Lower leg skin (tissue), 4 donors: ENCODE measurements at regions of chr7 and their contacts with region 1.

Region 1: GRCh38 chr7:121329191-121330052 is 622 bp downstream of the WNT16 start:
- DNase-seq: peak; percentile 26 to 84
- H3K4me3 ChIP-seq: peak overlapping the region; percentile 10
- CTCF ChIP-seq: no peak
- POLR2A ChIP-seq: no peak

Region 2: GRCh38 chr7:121138262-121138933 is 191.0 kb before region 1 on chr7:
- intact Hi-C with region 1: loop called (anchors 10 kb)
- DNase-seq: no peak
- H3K4me3 ChIP-seq: no peak overlapping the region
- CTCF ChIP-seq: no peak
- POLR2A ChIP-seq: no peak